CD4-positive, alpha-beta memory T cell (primary cell): ENCODE measurements at regions of chrX and their contacts with region 1.

Region 1: GRCh38 chrX:70433848-70434351 is 10.7 kb upstream of the DLG3 start:
- DNase-seq: peak; percentile 73 to 76 (median 76)
- H3K4me3 ChIP-seq: peak overlapping the region; percentile 69 to 82
- H3K4me3 Mint-ChIP-seq: peak overlapping the region; percentile 89 to 95 (median 92)
- H3K27ac ChIP-seq: peak overlapping the region; percentile 40
- H3K27ac Mint-ChIP-seq: peak overlapping the region; percentile 86 to 95 (median 94)
- H3K4me1 ChIP-seq: peaks cover 9% of the 10 kb centered on the region
- H3K4me1 Mint-ChIP-seq: peaks cover 2 to 27% (median 11%) of the 10 kb centered on the region in 4 donors
- H3K27me3 ChIP-seq: no peaks in the 10 kb centered on the region
- H3K27me3 Mint-ChIP-seq: peaks cover 0 to 2% of the 10 kb centered on the region in 2 donors

Region 2: DNA sequence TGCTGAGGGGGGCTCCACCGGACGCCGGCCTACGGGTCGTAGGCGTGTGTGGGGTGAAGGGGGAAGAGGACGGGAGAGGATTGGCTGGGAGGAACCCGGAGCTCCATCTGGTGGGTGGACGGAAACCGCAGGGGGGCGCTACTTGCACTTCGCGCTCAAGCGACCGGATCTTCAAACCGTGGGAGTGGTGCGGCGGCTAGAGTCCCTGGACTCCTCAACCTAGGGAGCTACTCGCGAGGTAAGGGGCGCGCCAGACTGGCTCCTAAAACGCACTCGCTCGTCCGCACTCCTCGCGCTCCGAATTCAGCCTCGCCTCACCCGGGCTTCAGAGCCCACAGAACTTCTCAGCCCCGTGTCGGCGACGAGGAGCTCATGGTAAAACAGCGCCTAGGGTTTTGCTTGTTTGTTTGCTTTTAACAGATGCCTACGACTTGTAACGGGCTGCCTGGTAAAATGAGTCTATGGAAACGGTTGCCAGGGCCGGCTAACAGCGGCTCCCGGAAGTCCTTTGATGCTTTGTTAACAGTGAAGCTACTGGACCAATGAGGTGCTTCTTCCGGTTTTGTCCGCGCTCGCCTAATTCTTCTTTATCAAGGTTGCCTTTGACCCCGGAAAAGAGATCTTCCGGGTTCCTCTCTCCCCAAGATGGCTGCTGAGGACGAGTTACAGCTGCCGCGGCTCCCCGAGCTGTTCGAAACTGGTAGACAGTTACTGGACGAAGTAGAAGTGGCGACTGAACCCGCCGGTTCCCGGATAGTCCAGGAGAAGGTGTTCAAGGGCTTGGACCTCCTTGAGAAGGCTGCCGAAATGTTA is 300.4 kb before region 1 on chrX and contains the start of gene IGBP1:
- CTCF ChIA-PET with region 1: interaction called, 7 read pairs
- POLR2A ChIA-PET with region 1: interaction called, 16 read pairs
- intact Hi-C with region 1: loop called (anchors 1 kb)
- DNase-seq: peak; percentile 78 to 94 (median 86)
- H3K4me3 ChIP-seq: peak within 1 kb of the TSS; percentile 89 to 90
- H3K4me3 Mint-ChIP-seq: peak within 1 kb of the TSS; percentile 87 to 99 (median 98)
- H3K27ac ChIP-seq: peak within 1 kb of the TSS; percentile 77
- H3K27ac Mint-ChIP-seq: peak within 1 kb of the TSS; percentile 84 to 99 (median 98)
- H3K4me1 ChIP-seq: peaks cover 35% of the 10 kb centered on the region
- H3K4me1 Mint-ChIP-seq: peaks cover 16 to 38% (median 22%) of the 10 kb centered on the region in 4 donors
- H3K27me3 ChIP-seq: no peaks in the 10 kb centered on the region
- H3K27me3 Mint-ChIP-seq: no peaks in the 10 kb centered on the region
- total RNA-seq, gene IGBP1: 60.8 to 66.2 TPM

Region 3: GRCh38 chrX:70289793-70290776 is 143.8 kb before region 1 on chrX and contains the starts of genes KIF4A and PDZD11:
- CTCF ChIA-PET with region 1: interaction called, 3 read pairs
- POLR2A ChIA-PET with region 1: interaction called, 3 read pairs
- intact Hi-C with region 1: loop called (anchors 10 kb)
- DNase-seq: peak; percentile 70 to 76 (median 75)
- H3K4me3 ChIP-seq: peak within 1 kb of the TSS; percentile 52 to 72
- H3K4me3 Mint-ChIP-seq: peak within 1 kb of the TSS; percentile 87 to 94 (median 88)
- H3K27ac ChIP-seq: peak within 1 kb of the TSS; percentile 66
- H3K27ac Mint-ChIP-seq: peak within 1 kb of the TSS; percentile 75 to 94 (median 88)
- H3K4me1 ChIP-seq: peaks cover 10% of the 10 kb centered on the region
- H3K4me1 Mint-ChIP-seq: peaks cover 5 to 21% (median 11%) of the 10 kb centered on the region in 4 donors
- H3K27me3 ChIP-seq: no peaks in the 10 kb centered on the region
- H3K27me3 Mint-ChIP-seq: no peaks in the 10 kb centered on the region
- total RNA-seq, gene KIF4A: 0.08 to 0.17 TPM
- total RNA-seq, gene PDZD11: 12.7 to 12.9 TPM

Region 4: GRCh38 chrX:70398899-70399298 is 35.0 kb before region 1 on chrX:
- CTCF ChIA-PET with region 1: interaction called, 4 read pairs
- POLR2A ChIA-PET with region 1: interaction called, 7 read pairs
- intact Hi-C with region 1: loop called (anchors 2 kb)
- DNase-seq: peak; percentile 45 to 59 (median 50)
- H3K4me3 ChIP-seq: no peak overlapping the region
- H3K4me3 Mint-ChIP-seq: peak overlapping the region in 6 of 8 donors; percentile 26 to 65 (median 53)
- H3K27ac ChIP-seq: no peak overlapping the region
- H3K27ac Mint-ChIP-seq: peak overlapping the region; percentile 81 to 97 (median 95)
- H3K4me1 ChIP-seq: peaks cover 7% of the 10 kb centered on the region
- H3K4me1 Mint-ChIP-seq: peaks cover 0 to 10% (median 5%) of the 10 kb centered on the region in 4 donors
- H3K27me3 ChIP-seq: no peaks in the 10 kb centered on the region
- H3K27me3 Mint-ChIP-seq: no peaks in the 10 kb centered on the region

Region 5: GRCh38 chrX:70411475-70411874 is 22.4 kb before region 1 on chrX:
- CTCF ChIA-PET with region 1: no interaction called
- POLR2A ChIA-PET with region 1: no interaction called
- intact Hi-C with region 1: no loop called
- DNase-seq: no peak
- H3K4me3 ChIP-seq: no peak overlapping the region
- H3K4me3 Mint-ChIP-seq: no peak overlapping the region
- H3K27ac ChIP-seq: no peak overlapping the region
- H3K27ac Mint-ChIP-seq: no peak overlapping the region
- H3K4me1 ChIP-seq: no peaks in the 10 kb centered on the region
- H3K4me1 Mint-ChIP-seq: no peaks in the 10 kb centered on the region
- H3K27me3 ChIP-seq: no peaks in the 10 kb centered on the region
- H3K27me3 Mint-ChIP-seq: no peaks in the 10 kb centered on the region

Region 6: DNA sequence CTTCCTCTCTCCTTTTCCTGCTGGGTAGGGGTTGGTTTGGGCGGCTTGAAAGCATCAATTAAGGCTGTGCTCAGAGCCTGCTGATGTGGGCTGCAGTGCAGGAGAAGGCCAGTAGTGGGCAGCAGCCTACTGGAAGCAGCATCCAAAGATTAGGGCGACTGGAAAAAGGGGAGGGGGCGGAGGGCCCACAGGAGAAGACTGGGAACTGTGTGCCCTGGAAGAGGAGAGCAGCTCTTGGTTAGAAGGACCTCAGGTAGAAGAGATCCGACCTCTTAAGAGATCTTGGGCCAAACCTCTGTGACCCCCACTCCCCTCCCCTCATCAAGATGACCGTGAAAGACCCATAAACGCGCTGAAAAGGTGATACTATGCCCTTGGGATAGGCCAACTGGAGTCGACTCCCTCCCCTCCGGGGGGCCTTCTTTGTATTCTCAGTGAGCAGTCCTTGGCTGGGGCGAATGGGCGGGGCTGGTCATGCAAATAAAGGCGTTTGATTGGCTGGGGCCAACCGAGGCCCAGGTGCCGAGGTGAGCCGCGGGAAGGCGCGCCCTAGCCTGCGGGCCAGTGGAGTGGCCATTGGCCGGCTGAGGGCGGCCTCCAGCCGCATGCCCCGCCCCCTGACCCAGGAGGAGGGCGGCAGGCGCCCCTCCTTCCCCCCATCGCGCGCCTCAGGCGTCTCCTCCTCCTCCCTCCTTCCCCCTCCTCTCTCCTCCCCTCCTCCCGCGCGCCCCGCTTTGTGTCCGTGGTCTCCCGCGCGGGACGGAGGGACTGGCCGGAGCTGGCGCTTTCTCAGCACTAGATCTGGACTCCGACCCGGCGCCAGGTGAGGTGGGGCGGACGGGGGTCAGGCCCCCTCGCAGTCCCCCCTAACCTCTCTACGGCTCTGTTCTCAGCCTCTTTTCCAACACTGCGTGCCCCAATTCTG is 20.8 kb after region 1 on chrX:
- CTCF ChIA-PET with region 1: interaction called, 8 read pairs
- POLR2A ChIA-PET with region 1: interaction called, 14 read pairs
- intact Hi-C with region 1: loop called (anchors 2 kb)
- DNase-seq: peak; percentile 68 to 92 (median 73)
- H3K4me3 ChIP-seq: peak overlapping the region; percentile 57 to 60
- H3K4me3 Mint-ChIP-seq: peak overlapping the region; percentile 77 to 90 (median 88)
- H3K27ac ChIP-seq: peak overlapping the region; percentile 60
- H3K27ac Mint-ChIP-seq: peak overlapping the region; percentile 78 to 94 (median 92)
- H3K4me1 ChIP-seq: peaks cover 33% of the 10 kb centered on the region
- H3K4me1 Mint-ChIP-seq: peaks cover 23 to 48% (median 32%) of the 10 kb centered on the region in 4 donors
- H3K27me3 ChIP-seq: no peaks in the 10 kb centered on the region
- H3K27me3 Mint-ChIP-seq: no peaks in the 10 kb centered on the region